ENCODE measurements at regions of chr19 and their contacts with region 1.

Region 1: GRCh38 chr19:3304871-3305423 is 61.4 kb upstream of the NFIC start:
- DNase-seq: peak; percentile 41
- ATAC-seq: peak; percentile 78
- H3K4me3 ChIP-seq: no peak overlapping the region
- H3K27ac ChIP-seq: no peak overlapping the region
- H3K4me1 ChIP-seq: no peaks in the 10 kb centered on the region
- H3K27me3 ChIP-seq: peaks cover 17% of the 10 kb centered on the region
- CTCF ChIP-seq: peak; percentile 88
- POLR2A ChIP-seq: no peak
- RAD21 ChIP-seq: peak; percentile 83

Region 2: GRCh38 chr19:3471954-3472655 is 167.2 kb after region 1 on chr19:
- CTCF ChIA-PET with region 1: no interaction called
- POLR2A ChIA-PET with region 1: no interaction called
- dilution Hi-C with region 1: no loop called
- in situ Hi-C with region 1: no loop called
- intact Hi-C with region 1: loop called (anchors 5 kb)
- DNase-seq: no peak
- ATAC-seq: peak; percentile 40; the same call in 1 of the 2 replicates
- H3K4me3 ChIP-seq: no peak overlapping the region
- H3K27ac ChIP-seq: no peak overlapping the region
- H3K4me1 ChIP-seq: no peaks in the 10 kb centered on the region
- H3K27me3 ChIP-seq: peaks cover 12% of the 10 kb centered on the region
- CTCF ChIP-seq: peak; percentile 69
- POLR2A ChIP-seq: no peak
- RAD21 ChIP-seq: peak; percentile 74

Region 3: DNA sequence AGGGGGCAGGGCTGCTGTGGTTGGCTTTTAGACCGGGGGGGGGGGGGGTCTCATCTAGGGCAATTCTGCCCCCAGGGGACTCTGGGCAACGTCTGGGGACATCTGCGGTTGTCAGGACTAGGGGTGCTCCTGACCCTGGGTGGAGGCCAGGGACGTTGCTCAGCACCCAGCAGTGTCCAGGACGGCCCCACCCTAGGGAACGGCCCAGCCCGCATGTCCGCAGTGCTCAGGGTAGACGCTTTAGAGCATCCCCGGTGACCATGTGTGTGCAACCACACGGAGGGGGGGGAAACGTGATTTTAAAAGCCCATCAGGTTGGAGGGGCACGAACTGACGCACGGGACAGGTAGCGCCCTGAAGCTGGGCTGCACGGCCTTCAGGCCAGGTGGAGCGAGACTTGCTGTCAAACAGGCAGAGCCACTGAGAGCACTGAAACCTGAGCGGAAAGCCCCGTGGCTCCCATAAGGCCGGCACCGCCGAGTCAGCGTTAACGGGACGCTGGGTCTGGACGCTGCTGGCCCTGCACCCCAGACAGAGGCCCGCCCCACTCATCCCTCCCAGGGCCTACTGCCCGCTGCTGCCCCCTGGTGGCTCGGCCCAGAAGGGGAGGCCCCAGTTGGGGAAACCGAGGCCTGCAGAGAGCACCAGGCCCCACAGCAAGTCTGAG is 313.3 kb after region 1 on chr19:
- CTCF ChIA-PET with region 1: no interaction called
- POLR2A ChIA-PET with region 1: no interaction called
- dilution Hi-C with region 1: no loop called
- in situ Hi-C with region 1: loop called (anchors 25 kb)
- intact Hi-C with region 1: no loop called
- DNase-seq: peak; percentile 29
- ATAC-seq: peak; percentile 95
- H3K4me3 ChIP-seq: no peak overlapping the region
- H3K27ac ChIP-seq: no peak overlapping the region
- H3K4me1 ChIP-seq: peaks cover 3% of the 10 kb centered on the region; the same call in 1 of the 2 replicates
- H3K27me3 ChIP-seq: no peaks in the 10 kb centered on the region
- CTCF ChIP-seq: peak; percentile 84
- POLR2A ChIP-seq: no peak
- RAD21 ChIP-seq: peak; percentile 80

Measured in IMR-90 (cell line).